ENCODE measurements at regions of chr17 and their contacts with region 1.

Region 1: GRCh38 chr17:74770498-74771318 is 5.4 kb downstream of the NAT9 start:
- DNase-seq: peak; percentile 84
- H3K4me3 Mint-ChIP-seq: no peak overlapping the region
- H3K27ac Mint-ChIP-seq: peak overlapping the region; percentile 79
- H3K4me1 Mint-ChIP-seq: peaks cover 32% of the 10 kb centered on the region
- H3K27me3 Mint-ChIP-seq: no peaks in the 10 kb centered on the region

Region 2: DNA sequence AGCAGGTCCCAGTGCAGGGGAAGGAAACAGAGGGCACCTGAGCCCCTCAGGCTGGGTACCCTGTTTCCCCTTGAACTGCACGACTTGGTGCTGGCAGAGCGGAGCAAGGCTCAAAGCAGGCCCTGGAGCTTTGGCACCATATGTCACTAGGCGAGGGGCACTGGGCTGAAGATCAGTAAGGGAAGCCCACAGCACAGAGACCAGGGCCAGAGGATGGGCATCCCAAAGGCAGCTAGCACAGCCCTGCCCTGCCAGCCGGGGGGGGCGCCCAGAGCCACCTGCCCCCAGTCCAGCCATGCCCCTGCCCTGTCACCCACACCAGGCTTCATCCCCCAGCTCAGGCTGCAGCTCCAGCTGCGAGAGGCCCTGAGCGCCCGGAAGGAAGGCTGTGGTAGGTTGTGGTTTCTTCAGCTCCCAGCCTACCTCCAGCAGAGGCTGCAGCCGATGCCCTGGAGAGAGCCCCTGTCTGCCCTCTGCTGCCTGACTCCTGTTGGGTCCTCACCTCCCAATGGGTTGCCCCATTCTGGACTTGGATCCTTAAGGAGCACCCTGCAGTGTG is 11.4 kb before region 1 on chr17:
- CTCF ChIA-PET with region 1: interaction called, 30 read pairs
- intact Hi-C with region 1: loop called (anchors 1 kb)
- DNase-seq: peak; percentile 70
- H3K4me3 Mint-ChIP-seq: no peak overlapping the region
- H3K27ac Mint-ChIP-seq: peak overlapping the region; percentile 86
- H3K4me1 Mint-ChIP-seq: peaks cover 61% of the 10 kb centered on the region
- H3K27me3 Mint-ChIP-seq: no peaks in the 10 kb centered on the region

Region 3: GRCh38 chr17:74852237-74853047 is 81.7 kb after region 1 on chr17:
- CTCF ChIA-PET with region 1: no interaction called
- intact Hi-C with region 1: no loop called
- DNase-seq: peak; percentile 64
- H3K4me3 Mint-ChIP-seq: peak overlapping the region; percentile 71
- H3K27ac Mint-ChIP-seq: no peak overlapping the region
- H3K4me1 Mint-ChIP-seq: peaks cover 3% of the 10 kb centered on the region
- H3K27me3 Mint-ChIP-seq: peaks cover 43% of the 10 kb centered on the region